SK-N-SH (cell line): ENCODE measurements at regions of chr2 and their contacts with region 1.

Region 1: GRCh38 chr2:241877989-241878970 is 8.8 kb downstream of the RTP5 start:
- DNase-seq: peak; percentile 90
- H3K4me3 ChIP-seq: no peak overlapping the region
- H3K27ac ChIP-seq: no peak overlapping the region; a peak in 1 of 4 replicates
- H3K4me1 ChIP-seq: peaks cover 14 to 24% of the 10 kb centered on the region in 2 experiments
- H3K27me3 ChIP-seq: no peaks in the 10 kb centered on the region
- CTCF ChIP-seq: peak; percentile 64
- EP300 ChIP-seq: no peak
- RAD21 ChIP-seq: peak; percentile 82

Region 2: DNA sequence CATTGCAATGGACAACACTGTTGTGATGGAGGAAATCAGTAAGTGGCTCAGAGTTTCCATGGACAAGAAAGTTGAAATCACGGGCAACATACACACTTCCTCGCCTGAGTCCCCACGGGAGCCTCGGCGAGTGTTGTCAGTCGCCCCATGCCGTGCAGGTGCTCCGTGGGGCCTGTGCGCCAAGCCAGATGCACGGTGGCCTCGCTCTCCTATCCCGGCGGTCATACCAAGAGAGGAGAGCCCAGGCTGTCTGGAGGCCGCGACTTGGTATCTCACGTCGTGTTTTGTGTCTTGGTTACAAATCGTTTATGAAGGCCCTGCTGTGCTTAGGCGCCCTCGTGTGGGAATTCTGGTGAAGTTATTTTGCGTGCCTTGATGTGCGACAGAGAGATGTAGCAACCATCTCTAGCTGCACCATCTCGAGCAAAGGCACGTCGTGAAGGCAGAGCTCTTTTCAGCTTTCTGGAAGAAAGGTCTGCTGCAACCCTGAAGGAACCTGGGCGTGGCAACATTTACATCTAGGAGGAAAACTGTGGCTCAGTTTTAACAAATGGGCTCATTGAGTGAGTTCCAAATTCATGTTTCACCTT is 219.0 kb before region 1 on chr2:
- CTCF ChIA-PET with region 1: interaction called, 18 read pairs
- POLR2A ChIA-PET with region 1: no interaction called
- DNase-seq: peak; percentile 72
- H3K4me3 ChIP-seq: no peak overlapping the region
- H3K27ac ChIP-seq: no peak overlapping the region
- H3K4me1 ChIP-seq: no peaks in the 10 kb centered on the region
- H3K27me3 ChIP-seq: no peaks in the 10 kb centered on the region
- CTCF ChIP-seq: peak; percentile 66
- EP300 ChIP-seq: no peak
- RAD21 ChIP-seq: peak; percentile 81

Region 3: GRCh38 chr2:241666627-241667400 is 211.5 kb before region 1 on chr2:
- CTCF ChIA-PET with region 1: interaction called, 32 read pairs
- POLR2A ChIA-PET with region 1: no interaction called
- DNase-seq: peak; percentile 91
- H3K4me3 ChIP-seq: no peak overlapping the region; a peak in 1 of 4 replicates
- H3K27ac ChIP-seq: peak overlapping the region; percentile 45 to 87; a peak in 3 of 4 replicates
- H3K4me1 ChIP-seq: peaks cover 10 to 21% of the 10 kb centered on the region in 2 experiments; a peak in 2 of 4 replicates
- H3K27me3 ChIP-seq: no peaks in the 10 kb centered on the region
- CTCF ChIP-seq: no peak
- EP300 ChIP-seq: no peak
- RAD21 ChIP-seq: peak; percentile 33; the same call in 1 of the 2 replicates

Region 4: DNA sequence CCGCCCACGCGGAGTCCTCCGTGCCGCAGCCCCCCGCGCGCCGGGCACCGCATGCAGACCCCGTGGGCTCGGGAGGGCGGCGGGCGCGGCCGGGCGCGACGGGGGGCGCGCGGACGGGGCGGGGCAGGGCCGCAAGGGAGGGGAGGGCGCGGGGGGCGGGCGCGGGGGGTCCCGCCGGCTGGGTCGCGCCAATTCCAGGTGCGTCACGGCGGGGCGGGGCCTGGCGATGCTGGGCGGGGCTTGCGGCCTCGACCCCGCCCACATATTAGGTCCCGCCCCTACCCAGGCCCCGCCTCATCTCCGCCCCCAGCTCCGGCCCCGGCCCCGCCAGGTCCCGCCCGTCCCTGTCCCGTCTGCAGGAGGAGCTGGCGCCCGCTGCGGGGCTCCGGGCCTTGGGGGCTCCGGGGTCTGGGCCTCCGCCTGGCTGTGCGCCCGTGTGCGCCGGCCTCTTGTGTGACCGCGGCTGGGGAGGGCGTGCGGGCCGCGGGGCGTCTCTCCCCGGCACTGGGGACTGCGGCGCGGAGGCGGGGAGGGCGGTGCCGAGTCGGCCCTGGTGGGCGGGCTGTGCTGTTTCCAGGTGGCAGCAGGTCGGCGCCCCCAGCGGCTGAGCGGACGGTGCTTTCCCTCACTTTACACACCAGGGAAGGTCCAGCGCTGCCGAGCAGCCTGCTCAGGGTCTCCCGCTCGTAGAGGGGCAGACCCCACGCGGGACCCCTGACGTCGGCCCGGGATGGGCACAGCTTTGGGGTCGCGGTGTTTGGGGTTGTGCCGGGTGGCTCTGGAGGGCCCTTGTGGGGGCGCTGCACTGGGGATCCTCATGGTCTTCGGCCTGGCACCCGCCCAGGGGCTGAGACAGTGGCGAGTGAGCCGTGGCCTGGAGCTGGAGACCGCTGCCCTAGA is 175.9 kb before region 1 on chr2:
- CTCF ChIA-PET with region 1: interaction called, 58 read pairs
- POLR2A ChIA-PET with region 1: interaction called, 6 read pairs
- DNase-seq: peak; percentile 96
- H3K4me3 ChIP-seq: peak overlapping the region; percentile 63 to 88
- H3K27ac ChIP-seq: peak overlapping the region; percentile 78 to 86; a peak in 3 of 4 replicates
- H3K4me1 ChIP-seq: peaks cover 0 to 11% of the 10 kb centered on the region in 2 experiments; a peak in 1 of 4 replicates
- H3K27me3 ChIP-seq: no peaks in the 10 kb centered on the region
- CTCF ChIP-seq: peak; percentile 60
- EP300 ChIP-seq: no peak
- RAD21 ChIP-seq: no peak

Region 5: DNA sequence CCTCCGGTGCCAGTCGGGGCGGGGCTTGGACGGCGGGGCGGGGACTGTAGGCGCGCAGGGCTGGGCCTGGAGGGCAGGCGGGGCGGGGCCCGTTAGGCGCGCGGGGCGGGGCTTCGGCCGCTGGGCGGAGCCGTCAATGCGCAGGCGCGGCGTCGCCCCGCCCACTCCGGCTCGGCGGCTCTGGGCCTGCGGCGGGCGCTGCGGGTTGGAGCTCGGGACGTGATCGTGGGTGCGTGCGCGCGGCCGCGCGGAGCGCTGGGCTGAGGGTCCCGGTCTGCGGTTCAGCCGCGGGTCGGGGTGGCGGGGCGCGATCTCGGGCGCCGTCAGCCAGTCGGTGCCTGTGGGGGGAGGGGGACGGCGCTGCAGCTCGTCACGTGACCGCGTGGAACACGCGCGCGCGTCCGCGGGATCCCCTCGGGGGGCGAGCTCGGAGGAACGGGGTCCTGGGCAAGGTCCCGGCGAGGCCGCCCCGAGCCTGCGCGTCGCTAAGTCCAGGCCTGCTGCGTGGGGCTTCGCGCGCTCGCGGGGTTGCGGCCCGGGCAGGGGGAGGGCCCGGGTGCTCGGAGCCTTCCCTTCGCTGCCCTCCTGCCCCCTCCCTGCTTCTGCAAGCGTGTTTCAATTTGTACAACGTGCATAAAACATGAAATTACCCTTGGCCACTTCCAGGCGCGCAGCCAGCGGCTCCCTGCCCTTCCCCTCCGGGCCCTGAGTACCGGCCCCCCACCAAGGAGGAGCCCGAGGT is 143.6 kb before region 1 on chr2 and contains the start of gene D2HGDH:
- CTCF ChIA-PET with region 1: interaction called, 37 read pairs
- POLR2A ChIA-PET with region 1: interaction called, 7 read pairs
- DNase-seq: peak; percentile 99
- H3K4me3 ChIP-seq: peak within 1 kb of the TSS; percentile 75 to 85
- H3K27ac ChIP-seq: peak within 1 kb of the TSS; percentile 71 to 88
- H3K4me1 ChIP-seq: no peaks in the 10 kb centered on the region; a peak in 1 of 4 replicates
- H3K27me3 ChIP-seq: no peaks in the 10 kb centered on the region
- CTCF ChIP-seq: no peak
- EP300 ChIP-seq: no peak
- RAD21 ChIP-seq: no peak
- polyA plus RNA-seq, gene D2HGDH: 33.7 and 36.3 TPM in 2 replicates

Region 6: DNA sequence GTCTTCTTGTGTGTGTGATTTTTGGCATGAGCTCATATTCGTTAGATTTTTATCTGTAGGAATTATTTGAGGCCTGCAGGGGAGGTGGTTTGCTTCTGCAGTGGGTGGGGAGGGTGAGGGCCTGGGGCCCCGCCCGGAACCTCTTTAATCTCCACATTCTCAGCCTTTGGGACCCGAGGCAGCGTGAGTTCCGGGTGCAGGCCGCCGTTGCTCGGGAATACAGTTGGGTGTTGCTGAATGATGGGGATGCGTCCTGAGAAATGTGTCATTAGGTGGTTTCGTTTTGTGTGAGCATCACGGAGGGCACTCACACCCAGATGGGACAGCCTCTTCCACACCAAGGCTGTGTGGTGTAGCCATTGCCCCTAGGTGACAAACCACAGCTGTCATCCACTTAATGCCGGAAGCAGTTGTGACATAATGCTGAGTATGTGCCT is 115.3 kb before region 1 on chr2:
- CTCF ChIA-PET with region 1: interaction called, 11 read pairs
- POLR2A ChIA-PET with region 1: no interaction called
- DNase-seq: peak; percentile 45
- H3K4me3 ChIP-seq: no peak overlapping the region
- H3K27ac ChIP-seq: peak overlapping the region in 1 of 2 experiments; percentile 53; a peak in 2 of 4 replicates
- H3K4me1 ChIP-seq: peaks cover 0 to 32% of the 10 kb centered on the region in 2 experiments; a peak in 1 of 4 replicates
- H3K27me3 ChIP-seq: no peaks in the 10 kb centered on the region
- CTCF ChIP-seq: no peak
- EP300 ChIP-seq: no peak
- RAD21 ChIP-seq: no peak

Region 7: DNA sequence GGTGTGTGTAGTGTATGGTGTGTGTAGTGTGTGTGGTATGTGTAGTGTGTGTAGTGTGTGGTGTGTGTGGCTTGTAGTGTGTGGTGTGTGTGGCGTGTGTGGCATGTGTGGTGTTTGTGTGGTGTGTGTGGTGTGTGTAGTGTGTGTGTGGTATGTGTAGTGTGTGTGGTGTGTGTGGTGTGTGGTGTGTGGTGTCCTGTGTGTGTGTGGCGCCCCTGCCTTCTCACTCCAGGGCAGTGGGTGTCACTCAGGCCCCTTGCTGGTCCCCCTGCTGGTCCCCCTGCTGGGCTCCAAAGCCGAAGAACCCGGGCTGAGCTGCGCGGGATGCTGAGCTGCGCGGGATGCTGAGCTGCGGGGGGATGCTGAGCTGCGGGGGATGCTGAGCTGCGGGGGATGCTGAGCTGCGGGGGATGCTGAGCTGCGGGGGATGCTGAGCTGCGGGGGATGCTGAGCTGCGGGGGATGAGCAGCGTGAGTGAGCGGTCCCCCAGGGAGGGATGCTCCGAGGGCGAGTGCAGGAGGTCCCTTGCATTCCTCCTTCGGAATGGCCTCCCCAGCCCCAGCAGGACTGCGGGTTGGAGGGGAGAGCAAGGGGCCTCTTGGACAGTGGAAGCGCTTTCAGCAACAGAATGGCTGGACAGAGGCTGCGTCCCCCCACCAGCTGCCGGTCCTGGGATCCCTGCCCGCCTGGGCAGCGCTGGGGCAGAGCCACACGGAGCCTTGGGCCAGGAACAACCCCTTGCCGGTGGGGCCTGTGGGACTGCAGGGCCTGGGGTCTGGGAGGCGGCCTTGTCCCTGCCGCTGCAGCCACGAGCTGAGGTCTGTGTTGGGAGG is 12.1 kb before region 1 on chr2:
- CTCF ChIA-PET with region 1: interaction called, 20 read pairs
- POLR2A ChIA-PET with region 1: no interaction called
- DNase-seq: peak; percentile 82
- H3K4me3 ChIP-seq: no peak overlapping the region
- H3K27ac ChIP-seq: no peak overlapping the region
- H3K4me1 ChIP-seq: peaks cover 0 to 4% of the 10 kb centered on the region in 2 experiments; a peak in 1 of 4 replicates
- H3K27me3 ChIP-seq: no peaks in the 10 kb centered on the region
- CTCF ChIP-seq: no peak
- EP300 ChIP-seq: no peak
- RAD21 ChIP-seq: no peak